Mammary epithelial cell (primary cell): ENCODE measurements at regions of chr16 and their contacts with region 1.

Region 1: DNA sequence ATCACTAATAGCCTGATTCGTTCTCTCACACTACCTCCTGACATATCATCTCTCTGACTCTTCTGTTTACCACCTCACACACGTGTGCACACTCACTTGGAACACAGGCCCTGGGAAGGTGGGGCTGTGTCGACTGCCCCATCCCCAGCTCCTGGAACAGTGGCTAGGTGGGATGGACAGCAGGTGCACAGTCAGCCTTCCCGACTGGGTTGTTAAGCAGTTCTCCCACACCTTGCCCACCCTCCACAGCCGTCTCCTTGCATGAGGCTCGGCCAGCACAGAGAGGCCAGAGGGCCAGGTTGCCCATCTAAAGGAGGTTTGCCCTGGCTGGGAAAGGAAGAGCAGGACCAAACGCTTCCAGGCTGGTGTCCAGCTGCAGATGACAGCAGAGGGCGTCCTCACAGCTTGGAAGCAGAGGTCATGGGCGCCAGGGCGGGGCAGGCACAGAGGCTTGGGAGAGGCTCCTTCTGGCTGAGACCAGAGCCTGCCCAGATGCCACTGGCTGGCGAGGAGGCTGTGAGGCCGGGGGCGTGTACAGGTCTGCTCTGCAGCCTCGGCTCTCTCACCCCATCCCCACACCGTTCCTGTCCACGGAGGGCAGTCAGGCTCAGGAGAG is 92.8 kb downstream of the AMFR start:
- DNase-seq: peak; percentile 54
- H3K4me3 ChIP-seq: no peak overlapping the region
- H3K27ac ChIP-seq: no peak overlapping the region
- H3K4me1 ChIP-seq: peaks cover 38% of the 10 kb centered on the region
- H3K27me3 ChIP-seq: no peaks in the 10 kb centered on the region
- CTCF ChIP-seq: peak; percentile 7 to 53

Region 2: DNA sequence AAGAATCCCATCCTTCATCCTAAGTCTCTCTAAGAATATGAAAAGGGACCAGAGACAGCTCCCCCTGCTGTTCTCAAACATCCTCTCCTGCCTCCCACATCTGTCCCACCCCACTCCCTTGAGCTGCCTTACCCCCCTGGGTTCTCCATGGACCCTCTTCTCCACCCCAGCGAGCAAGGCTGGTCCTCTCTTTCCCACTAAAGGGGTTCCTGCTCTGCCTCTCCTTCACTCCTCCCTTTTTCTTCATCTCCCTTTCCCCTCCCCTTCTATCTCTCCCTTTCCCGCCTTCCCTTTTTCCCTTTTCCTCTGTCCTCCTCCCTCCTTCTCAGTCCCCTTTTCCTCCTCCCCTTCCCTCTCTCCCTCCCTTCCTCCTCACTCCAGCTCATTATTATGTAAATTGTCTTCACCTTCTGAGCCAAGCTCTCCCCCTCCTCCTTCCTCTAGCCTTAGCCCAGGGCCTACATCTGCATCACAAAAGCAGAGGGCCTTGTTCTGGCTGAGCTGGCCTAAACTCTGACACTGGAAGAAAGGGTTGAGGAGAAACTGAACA is 51.2 kb before region 1 on chr16:
- CTCF ChIA-PET with region 1: no interaction called
- dilution Hi-C with region 1: no loop called
- in situ Hi-C with region 1: no loop called
- intact Hi-C with region 1: no loop called
- DNase-seq: no peak
- H3K4me3 ChIP-seq: no peak overlapping the region
- H3K27ac ChIP-seq: no peak overlapping the region
- H3K4me1 ChIP-seq: no peaks in the 10 kb centered on the region
- H3K27me3 ChIP-seq: no peaks in the 10 kb centered on the region
- CTCF ChIP-seq: peak; percentile 18 to 54

Region 3: GRCh38 chr16:56343661-56344526 is 11.3 kb after region 1 on chr16:
- CTCF ChIA-PET with region 1: no interaction called
- dilution Hi-C with region 1: no loop called
- in situ Hi-C with region 1: no loop called
- intact Hi-C with region 1: loop called (anchors 1 kb)
- DNase-seq: peak; percentile 44
- H3K4me3 ChIP-seq: no peak overlapping the region
- H3K27ac ChIP-seq: no peak overlapping the region
- H3K4me1 ChIP-seq: peaks cover 25% of the 10 kb centered on the region
- H3K27me3 ChIP-seq: no peaks in the 10 kb centered on the region
- CTCF ChIP-seq: no peak

Region 4: DNA sequence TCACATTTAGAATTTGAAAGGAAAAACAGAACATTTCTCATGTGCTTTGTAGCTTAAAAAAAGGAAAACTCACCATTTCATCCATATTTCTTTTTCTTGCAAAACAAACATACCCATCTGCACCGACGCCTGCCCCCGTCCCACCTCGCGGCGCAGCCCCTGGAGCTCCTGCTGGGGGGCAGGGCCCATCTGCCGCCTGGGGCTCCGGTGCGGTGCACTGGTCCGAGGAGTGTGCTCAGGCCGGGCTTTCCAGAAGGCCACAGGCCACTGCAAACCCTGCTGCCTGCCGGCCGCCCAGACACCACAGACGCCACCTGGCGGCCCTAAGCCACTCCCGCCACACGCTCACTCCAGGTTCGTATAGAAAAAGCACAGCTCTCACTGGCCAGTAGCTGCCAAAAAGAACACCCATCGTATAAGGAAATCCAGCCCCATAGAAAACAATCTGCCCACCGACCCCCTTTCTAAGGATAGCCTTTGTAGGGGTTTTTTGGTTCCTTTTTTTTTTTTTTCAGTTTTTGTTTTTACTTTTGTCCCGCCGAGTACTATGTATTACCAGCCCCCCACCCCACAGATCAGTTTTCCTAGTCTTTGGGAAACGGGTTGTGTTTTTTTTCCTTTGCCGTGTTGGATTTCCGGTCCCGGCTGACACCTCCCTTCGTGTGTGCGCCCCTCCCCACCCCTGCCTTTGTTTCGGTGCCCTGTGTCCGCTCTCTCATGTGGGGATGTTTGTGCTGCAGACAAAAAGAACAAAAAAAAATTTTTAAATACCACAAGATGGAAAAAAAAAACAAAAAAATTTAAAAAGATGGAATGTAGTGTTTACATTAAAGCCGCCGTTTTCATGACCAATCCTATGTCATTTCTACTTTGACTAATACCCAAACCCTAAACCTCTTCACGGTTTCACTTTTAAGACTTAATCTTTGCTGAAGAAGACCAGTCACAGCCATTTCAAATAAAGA is 24.0 kb after region 1 on chr16:
- CTCF ChIA-PET with region 1: interaction called, 5 read pairs
- dilution Hi-C with region 1: no loop called
- in situ Hi-C with region 1: no loop called
- intact Hi-C with region 1: loop called (anchors 1 kb)
- DNase-seq: peak; percentile 67
- H3K4me3 ChIP-seq: peak overlapping the region; percentile 34 to 68 (median 46)
- H3K27ac ChIP-seq: peak overlapping the region; percentile 26
- H3K4me1 ChIP-seq: peaks cover 11% of the 10 kb centered on the region
- H3K27me3 ChIP-seq: no peaks in the 10 kb centered on the region
- CTCF ChIP-seq: peak; percentile 84 to 96

Region 5: GRCh38 chr16:56365552-56365951 is 33.0 kb after region 1 on chr16:
- CTCF ChIA-PET with region 1: interaction called, 15 read pairs
- dilution Hi-C with region 1: no loop called
- in situ Hi-C with region 1: no loop called
- intact Hi-C with region 1: no loop called
- DNase-seq: no peak
- H3K4me3 ChIP-seq: no peak overlapping the region
- H3K27ac ChIP-seq: no peak overlapping the region
- H3K4me1 ChIP-seq: no peaks in the 10 kb centered on the region
- H3K27me3 ChIP-seq: no peaks in the 10 kb centered on the region
- CTCF ChIP-seq: no peak